ENCODE measurements at regions of chr11 and their contacts with region 1.

Region 1: GRCh38 chr11:66466225-66467027 is at the start of gene PELI3:
- DNase-seq: peak; percentile 92 to 98 (median 95)
- ATAC-seq: peak; percentile 86
- H3K4me3 ChIP-seq: peak within 1 kb of the TSS; percentile 76
- H3K4me3 Mint-ChIP-seq: peak within 1 kb of the TSS; percentile 92
- H3K27ac ChIP-seq: peak within 1 kb of the TSS; percentile 84 to 90
- H3K27ac Mint-ChIP-seq: peak within 1 kb of the TSS; percentile 86
- H3K4me1 ChIP-seq: peaks cover 26% of the 10 kb centered on the region
- H3K4me1 Mint-ChIP-seq: peaks cover 27% of the 10 kb centered on the region
- H3K27me3 ChIP-seq: no peaks in the 10 kb centered on the region
- H3K27me3 Mint-ChIP-seq: no peaks in the 10 kb centered on the region
- CTCF ChIP-seq: no peak
- total RNA-seq, gene PELI3: 20.7 to 23.8 TPM

Region 2: DNA sequence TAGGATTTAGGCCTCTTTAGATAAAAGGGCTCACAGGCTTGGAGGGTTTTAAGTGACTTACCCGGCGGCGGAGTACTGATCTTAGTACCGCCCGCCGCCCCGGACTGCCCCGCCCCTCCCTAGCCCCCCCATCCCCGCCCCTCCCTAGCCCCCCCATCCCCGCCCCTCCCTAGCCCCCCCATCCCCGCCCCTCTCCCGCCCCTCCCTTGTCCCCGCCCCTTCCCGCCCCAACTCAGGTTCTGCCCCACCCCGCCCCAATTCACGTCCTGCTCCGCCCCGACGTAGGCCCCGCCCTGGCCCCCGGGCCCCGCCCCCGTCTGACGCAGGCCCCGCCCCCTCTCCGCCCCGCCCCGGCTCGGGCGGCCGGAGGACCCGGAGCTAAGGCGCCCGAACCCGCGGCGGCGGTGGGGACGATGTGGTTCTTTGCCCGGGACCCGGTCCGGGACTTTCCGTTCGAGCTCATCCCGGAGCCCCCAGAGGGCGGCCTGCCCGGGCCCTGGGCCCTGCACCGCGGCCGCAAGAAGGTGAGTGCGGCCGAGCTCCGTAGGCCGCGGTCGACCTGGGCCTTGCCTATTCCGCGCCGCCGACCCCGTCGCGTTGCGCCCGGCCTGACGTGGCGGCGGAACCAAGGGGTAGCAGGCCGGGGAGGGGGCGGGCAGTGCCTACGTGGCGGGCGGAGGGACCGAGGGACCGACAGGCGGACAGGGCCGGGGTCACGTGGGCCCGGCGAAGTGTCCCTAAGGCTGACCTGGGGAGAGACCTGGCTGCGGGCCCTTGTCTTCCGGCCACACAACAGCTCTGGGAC is 941.5 kb before region 1 on chr11 and contains the start of gene SCYL1:
- CTCF ChIA-PET with region 1: no interaction called
- POLR2A ChIA-PET with region 1: no interaction called
- intact Hi-C with region 1: loop called in 1 of 2 experiments (anchors 5 kb)
- DNase-seq: peak; percentile 72 to 91 (median 81)
- ATAC-seq: peak; percentile 79
- H3K4me3 ChIP-seq: peak within 1 kb of the TSS; percentile 75
- H3K4me3 Mint-ChIP-seq: peak within 1 kb of the TSS; percentile 88
- H3K27ac ChIP-seq: peak within 1 kb of the TSS; percentile 60 to 84
- H3K27ac Mint-ChIP-seq: peak within 1 kb of the TSS; percentile 91
- H3K4me1 ChIP-seq: peaks cover 65% of the 10 kb centered on the region
- H3K4me1 Mint-ChIP-seq: peaks cover 58% of the 10 kb centered on the region
- H3K27me3 ChIP-seq: no peaks in the 10 kb centered on the region
- H3K27me3 Mint-ChIP-seq: no peaks in the 10 kb centered on the region
- CTCF ChIP-seq: no peak
- total RNA-seq, gene SCYL1: 57.4 to 60.7 TPM

Region 3: DNA sequence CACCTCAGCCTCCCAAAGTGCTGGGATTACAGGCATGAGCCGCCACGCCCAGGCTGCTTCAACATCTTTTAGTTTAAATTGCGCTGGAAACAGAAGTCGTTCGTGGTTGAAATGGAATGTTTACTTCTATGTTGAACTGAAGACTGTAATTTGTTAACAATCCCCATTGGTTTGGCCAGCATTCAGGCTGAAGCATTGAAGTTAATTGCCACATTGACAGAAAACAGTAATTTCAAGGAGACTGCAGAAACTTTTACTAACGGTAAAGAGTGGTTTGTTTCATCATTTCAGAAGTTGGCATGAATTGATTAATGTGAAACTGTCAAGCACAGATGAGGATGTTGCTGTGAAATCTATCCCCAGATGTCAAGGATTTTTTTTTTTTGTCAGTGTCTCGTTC is 699.9 kb before region 1 on chr11:
- CTCF ChIA-PET with region 1: no interaction called
- POLR2A ChIA-PET with region 1: no interaction called
- intact Hi-C with region 1: no loop called
- DNase-seq: no peak
- ATAC-seq: no peak
- H3K4me3 ChIP-seq: no peak overlapping the region
- H3K4me3 Mint-ChIP-seq: no peak overlapping the region
- H3K27ac ChIP-seq: no peak overlapping the region
- H3K27ac Mint-ChIP-seq: no peak overlapping the region
- H3K4me1 ChIP-seq: no peaks in the 10 kb centered on the region
- H3K4me1 Mint-ChIP-seq: peaks cover 5% of the 10 kb centered on the region
- H3K27me3 ChIP-seq: no peaks in the 10 kb centered on the region
- H3K27me3 Mint-ChIP-seq: peaks cover 2% of the 10 kb centered on the region
- CTCF ChIP-seq: no peak

Region 4: GRCh38 chr11:66438504-66439466 is 27.6 kb before region 1 on chr11 and contains the start of gene MRPL11:
- CTCF ChIA-PET with region 1: interaction called, 25 read pairs
- POLR2A ChIA-PET with region 1: interaction called, 35 read pairs
- intact Hi-C with region 1: loop called (anchors 2 kb)
- DNase-seq: peak; percentile 78 to 95 (median 86)
- ATAC-seq: peak; percentile 99
- H3K4me3 ChIP-seq: peak within 1 kb of the TSS; percentile 70
- H3K4me3 Mint-ChIP-seq: peak within 1 kb of the TSS; percentile 94
- H3K27ac ChIP-seq: peak within 1 kb of the TSS; percentile 67 to 89
- H3K27ac Mint-ChIP-seq: peak within 1 kb of the TSS; percentile 87
- H3K4me1 ChIP-seq: peaks cover 11% of the 10 kb centered on the region
- H3K4me1 Mint-ChIP-seq: peaks cover 13% of the 10 kb centered on the region
- H3K27me3 ChIP-seq: no peaks in the 10 kb centered on the region
- H3K27me3 Mint-ChIP-seq: peaks cover 3% of the 10 kb centered on the region
- CTCF ChIP-seq: peak; percentile 69
- total RNA-seq, gene MRPL11: 17.7 to 21.0 TPM

Region 5: GRCh38 chr11:66491315-66491935 is 25.0 kb after region 1 on chr11:
- CTCF ChIA-PET with region 1: no interaction called
- POLR2A ChIA-PET with region 1: no interaction called
- intact Hi-C with region 1: no loop called
- DNase-seq: peak in 1 of 14 experiments; percentile 9
- ATAC-seq: no peak
- H3K4me3 ChIP-seq: no peak overlapping the region
- H3K4me3 Mint-ChIP-seq: no peak overlapping the region
- H3K27ac ChIP-seq: no peak overlapping the region
- H3K27ac Mint-ChIP-seq: no peak overlapping the region
- H3K4me1 ChIP-seq: no peaks in the 10 kb centered on the region
- H3K4me1 Mint-ChIP-seq: no peaks in the 10 kb centered on the region
- H3K27me3 ChIP-seq: no peaks in the 10 kb centered on the region
- H3K27me3 Mint-ChIP-seq: no peaks in the 10 kb centered on the region
- CTCF ChIP-seq: no peak

Region 6: GRCh38 chr11:66545701-66546367 is 79.4 kb after region 1 on chr11 and contains the start of gene ZDHHC24:
- CTCF ChIA-PET with region 1: no interaction called
- POLR2A ChIA-PET with region 1: interaction called, 8 read pairs
- intact Hi-C with region 1: loop called in 1 of 2 experiments (anchors 2 kb)
- DNase-seq: peak; percentile 59 to 92 (median 73)
- ATAC-seq: peak; percentile 82
- H3K4me3 ChIP-seq: peak within 1 kb of the TSS; percentile 76
- H3K4me3 Mint-ChIP-seq: peak within 1 kb of the TSS; percentile 90
- H3K27ac ChIP-seq: peak within 1 kb of the TSS; percentile 69 to 70
- H3K27ac Mint-ChIP-seq: peak within 1 kb of the TSS; percentile 75
- H3K4me1 ChIP-seq: peaks cover 44% of the 10 kb centered on the region
- H3K4me1 Mint-ChIP-seq: peaks cover 39% of the 10 kb centered on the region
- H3K27me3 ChIP-seq: no peaks in the 10 kb centered on the region
- H3K27me3 Mint-ChIP-seq: no peaks in the 10 kb centered on the region
- CTCF ChIP-seq: no peak
- total RNA-seq, gene ZDHHC24: 17.0 to 18.4 TPM

Region 7: DNA sequence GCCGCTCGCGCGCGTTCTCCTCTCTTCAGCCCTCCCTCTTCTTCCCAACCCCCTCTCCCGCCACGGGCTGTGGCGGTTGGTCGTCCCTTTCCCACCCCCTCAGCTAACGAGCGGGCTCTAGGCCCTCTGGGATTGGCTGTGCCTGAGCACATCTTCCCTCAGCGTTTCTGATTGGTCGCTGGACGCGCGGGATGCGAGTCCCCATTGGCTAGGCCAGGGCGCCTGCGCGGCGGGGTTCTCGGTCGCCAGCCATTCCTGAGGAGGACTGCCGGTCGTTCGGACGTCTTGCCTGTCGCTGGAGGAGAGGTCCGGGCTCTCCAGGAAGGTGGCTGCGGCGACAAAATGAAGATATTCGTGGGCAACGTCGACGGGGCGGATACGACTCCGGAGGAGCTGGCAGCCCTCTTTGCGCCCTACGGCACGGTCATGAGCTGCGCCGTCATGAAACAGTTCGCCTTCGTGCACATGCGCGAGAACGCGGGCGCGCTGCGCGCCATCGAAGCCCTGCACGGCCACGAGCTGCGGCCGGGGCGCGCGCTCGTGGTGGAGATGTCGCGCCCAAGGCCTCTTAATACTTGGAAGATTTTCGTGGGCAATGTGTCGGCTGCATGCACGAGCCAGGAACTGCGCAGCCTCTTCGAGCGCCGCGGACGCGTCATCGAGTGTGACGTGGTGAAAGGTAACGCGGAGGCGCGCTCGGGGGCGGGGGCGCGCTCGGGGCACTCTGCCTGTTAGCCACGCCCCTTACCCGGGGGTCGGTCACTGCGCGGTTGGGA is 150.1 kb after region 1 on chr11 and contains the start of gene RBM14:
- CTCF ChIA-PET with region 1: no interaction called
- POLR2A ChIA-PET with region 1: interaction called, 12 read pairs
- intact Hi-C with region 1: loop called in 1 of 2 experiments (anchors 5 kb)
- DNase-seq: peak; percentile 95 to 100 (median 97)
- ATAC-seq: peak; percentile 81
- H3K4me3 ChIP-seq: peak within 1 kb of the TSS; percentile 99
- H3K4me3 Mint-ChIP-seq: peak within 1 kb of the TSS; percentile 99
- H3K27ac ChIP-seq: peak within 1 kb of the TSS; percentile 96 to 98
- H3K27ac Mint-ChIP-seq: peak within 1 kb of the TSS; percentile 94
- H3K4me1 ChIP-seq: peaks cover 50% of the 10 kb centered on the region
- H3K4me1 Mint-ChIP-seq: peaks cover 53% of the 10 kb centered on the region
- H3K27me3 ChIP-seq: no peaks in the 10 kb centered on the region
- H3K27me3 Mint-ChIP-seq: no peaks in the 10 kb centered on the region
- CTCF ChIP-seq: no peak
- total RNA-seq, gene RBM14: 239 to 250 TPM

Region 8: DNA sequence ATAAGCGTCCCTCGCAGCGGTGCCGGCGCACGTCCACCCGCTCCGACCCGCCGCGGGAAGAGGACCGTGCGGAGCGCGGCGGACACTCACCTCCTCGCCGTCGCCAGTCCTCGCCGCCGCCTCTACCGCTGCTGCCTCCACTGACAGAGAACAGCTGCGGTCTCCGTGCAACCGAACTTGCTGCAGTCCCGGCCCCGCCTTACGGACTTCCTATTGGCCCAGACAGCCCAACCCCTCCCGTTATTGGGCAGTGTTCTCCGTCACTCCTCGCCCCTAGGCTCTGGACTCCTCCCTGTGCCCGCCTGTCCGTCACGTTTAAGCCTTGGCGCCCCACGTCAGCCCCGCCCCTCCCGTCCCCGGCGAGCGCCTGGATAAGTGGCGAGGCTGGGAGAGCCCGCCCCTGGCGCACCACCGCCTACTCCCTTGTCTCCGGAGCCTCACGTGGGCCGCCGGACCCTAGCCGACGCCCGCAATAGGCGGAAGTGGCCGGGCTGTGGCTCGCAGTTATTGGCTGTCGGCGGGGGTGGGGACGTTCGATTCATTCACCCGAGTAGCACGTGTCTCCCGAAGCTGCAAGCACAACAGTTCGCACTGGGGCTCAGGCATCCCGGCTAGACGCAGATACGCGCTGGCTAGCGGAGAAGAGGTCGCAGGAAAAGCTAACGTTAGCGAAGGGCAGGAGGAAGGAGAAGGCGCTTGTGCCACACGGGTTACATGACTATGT is 492.0 kb after region 1 on chr11 and contains the start of gene PC:
- CTCF ChIA-PET with region 1: no interaction called
- POLR2A ChIA-PET with region 1: no interaction called
- intact Hi-C with region 1: loop called in 1 of 2 experiments (anchors 2 kb)
- DNase-seq: peak; percentile 91 to 99 (median 96)
- ATAC-seq: peak; percentile 96
- H3K4me3 ChIP-seq: peak within 1 kb of the TSS; percentile 57
- H3K4me3 Mint-ChIP-seq: peak within 1 kb of the TSS; percentile 91
- H3K27ac ChIP-seq: peak within 1 kb of the TSS; percentile 33 to 41
- H3K27ac Mint-ChIP-seq: peak within 1 kb of the TSS; percentile 71
- H3K4me1 ChIP-seq: peaks cover 20% of the 10 kb centered on the region
- H3K4me1 Mint-ChIP-seq: peaks cover 21% of the 10 kb centered on the region
- H3K27me3 ChIP-seq: no peaks in the 10 kb centered on the region
- H3K27me3 Mint-ChIP-seq: no peaks in the 10 kb centered on the region
- CTCF ChIP-seq: no peak
- total RNA-seq, gene PC: 5.1 to 7.1 TPM

Measured in CD4-positive, alpha-beta T cell (primary cell).